ENCODE measurements at regions of chr4 and their contacts with region 1.

Region 1: GRCh38 chr4:2843263-2843940 is at the start of gene ADD1:
- DNase-seq: peak; percentile 72 to 100 (median 88)
- ATAC-seq: peak; percentile 91 to 94 (median 93)
- H3K4me3 ChIP-seq: peak within 1 kb of the TSS; percentile 85 to 92
- H3K4me3 Mint-ChIP-seq: peak within 1 kb of the TSS; percentile 90 to 93 (median 93)
- H3K27ac ChIP-seq: peak within 1 kb of the TSS; percentile 57
- H3K27ac Mint-ChIP-seq: peak within 1 kb of the TSS; percentile 86 to 89
- H3K4me1 ChIP-seq: peaks cover 17 to 54% of the 10 kb centered on the region in 2 experiments
- H3K4me1 Mint-ChIP-seq: peaks cover 58 to 68% (median 66%) of the 10 kb centered on the region in 3 donors
- H3K27me3 ChIP-seq: no peaks in the 10 kb centered on the region
- H3K27me3 Mint-ChIP-seq: no peaks in the 10 kb centered on the region
- total RNA-seq, gene ADD1: 241 to 274 (median 256) TPM

Region 2: DNA sequence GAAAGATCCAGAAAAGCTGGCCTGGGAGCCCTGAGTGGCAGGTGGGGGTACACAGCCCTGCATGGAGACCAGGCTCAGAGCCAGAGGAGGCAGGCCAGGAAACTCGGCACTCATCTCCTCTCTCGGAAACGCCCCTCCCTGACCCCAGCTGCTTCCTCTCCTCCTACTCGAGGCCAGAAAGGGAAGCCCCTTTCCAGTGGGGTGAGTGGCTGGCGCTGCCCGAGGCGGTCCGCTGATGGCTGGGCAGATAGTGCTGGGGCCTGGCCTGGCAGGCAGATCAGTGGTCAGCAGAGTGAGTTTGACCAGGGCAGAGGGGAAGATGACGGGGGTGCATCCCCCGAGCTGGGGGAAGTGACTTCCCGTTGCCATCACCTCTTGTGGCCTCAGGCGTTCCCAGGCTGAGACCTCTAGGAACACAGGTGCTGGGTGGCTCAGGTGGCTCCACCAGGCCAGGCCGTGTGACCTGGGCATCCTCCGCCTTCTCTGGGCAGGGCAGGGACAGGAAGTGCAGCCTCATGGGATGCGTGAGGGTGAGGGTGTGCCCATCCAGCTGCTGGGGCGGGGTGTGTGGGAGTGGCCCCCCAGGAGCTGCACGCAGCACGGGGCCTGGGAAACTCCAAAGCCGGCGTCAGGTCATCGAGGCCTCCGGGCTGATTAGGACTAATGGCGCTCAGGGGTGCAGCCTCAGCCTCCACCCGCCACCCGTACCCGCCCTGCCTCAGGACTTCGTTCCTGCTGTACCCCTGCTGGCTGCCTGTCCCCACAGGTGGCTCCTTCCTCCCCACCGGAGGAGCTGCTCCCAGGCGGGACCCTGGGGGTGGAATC is 44.8 kb before region 1 on chr4:
- CTCF ChIA-PET with region 1: interaction called in 1 of 2 experiments, 16 read pairs
- POLR2A ChIA-PET with region 1: no interaction called
- DNase-seq: peak in 14 of 35 experiments; percentile 18 to 65 (median 38)
- ATAC-seq: peak; percentile 54 to 68 (median 62)
- H3K4me3 ChIP-seq: peak overlapping the region; percentile 33 to 64
- H3K4me3 Mint-ChIP-seq: peak overlapping the region; percentile 41 to 80 (median 68)
- H3K27ac ChIP-seq: peak overlapping the region; percentile 70
- H3K27ac Mint-ChIP-seq: peak overlapping the region; percentile 90 to 92
- H3K4me1 ChIP-seq: peaks cover 38 to 73% of the 10 kb centered on the region in 2 experiments
- H3K4me1 Mint-ChIP-seq: peaks cover 54 to 65% (median 62%) of the 10 kb centered on the region in 3 donors
- H3K27me3 ChIP-seq: peaks cover 0 to 2% of the 10 kb centered on the region in 2 experiments
- H3K27me3 Mint-ChIP-seq: no peaks in the 10 kb centered on the region

Region 3: DNA sequence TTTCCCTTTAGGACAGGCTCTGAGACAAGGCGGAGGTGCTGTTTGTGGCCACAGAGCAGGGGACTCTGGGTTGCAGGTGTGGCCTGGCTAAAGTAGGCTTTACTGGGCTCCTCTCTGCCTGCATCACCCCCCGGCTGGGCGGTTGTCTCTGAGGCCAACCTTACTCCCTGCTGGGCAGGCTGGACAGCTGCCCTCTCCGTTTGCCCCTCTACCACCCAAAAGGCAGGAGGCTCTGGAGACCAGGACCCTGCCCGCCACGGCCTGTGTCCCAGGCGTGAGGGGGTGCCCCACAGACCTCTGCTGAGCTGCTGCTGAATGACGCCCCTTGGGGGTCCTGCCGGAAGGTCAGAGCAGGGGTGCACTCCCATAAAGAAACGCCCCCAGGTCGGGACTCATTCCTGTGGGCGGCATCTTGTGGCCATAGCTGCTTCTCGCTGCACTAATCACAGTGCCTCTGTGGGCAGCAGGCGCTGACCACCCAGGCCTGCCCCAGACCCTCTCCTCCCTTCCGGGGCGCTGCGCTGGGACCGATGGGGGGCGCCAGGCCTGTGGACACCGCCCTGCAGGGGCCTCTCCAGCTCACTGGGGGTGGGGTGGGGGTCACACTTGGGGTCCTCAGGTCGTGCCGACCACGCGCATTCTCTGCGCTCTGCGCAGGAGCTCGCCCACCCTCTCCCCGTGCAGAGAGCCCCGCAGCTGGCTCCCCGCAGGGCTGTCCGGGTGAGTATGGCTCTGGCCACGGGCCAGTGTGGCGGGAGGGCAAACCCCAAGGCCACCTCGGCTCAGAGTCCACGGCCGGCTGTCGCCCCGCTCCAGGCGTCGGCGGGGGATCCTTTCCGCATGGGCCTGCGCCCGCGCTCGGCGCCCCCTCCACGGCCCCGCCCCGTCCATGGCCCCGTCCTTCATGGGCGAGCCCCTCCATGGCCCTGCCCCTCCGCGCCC is 230.0 kb after region 1 on chr4:
- CTCF ChIA-PET with region 1: no interaction called
- POLR2A ChIA-PET with region 1: interaction called in 1 of 2 experiments, 20 read pairs
- DNase-seq: peak in 7 of 35 experiments; percentile 1 to 17 (median 6)
- ATAC-seq: peak in 3 of 4 experiments; percentile 48 to 56 (median 49)
- H3K4me3 ChIP-seq: peak overlapping the region; percentile 44 to 64
- H3K4me3 Mint-ChIP-seq: peak overlapping the region; percentile 24 to 88 (median 34)
- H3K27ac ChIP-seq: no peak overlapping the region
- H3K27ac Mint-ChIP-seq: no peak overlapping the region
- H3K4me1 ChIP-seq: peaks cover 12 to 23% of the 10 kb centered on the region in 2 experiments
- H3K4me1 Mint-ChIP-seq: peaks cover 21 to 22% (median 22%) of the 10 kb centered on the region in 3 donors
- H3K27me3 ChIP-seq: no peaks in the 10 kb centered on the region
- H3K27me3 Mint-ChIP-seq: no peaks in the 10 kb centered on the region

Measured in T-cell (primary cell).